ENCODE measurements at regions of chr9 and their contacts with region 1.

Region 1: DNA sequence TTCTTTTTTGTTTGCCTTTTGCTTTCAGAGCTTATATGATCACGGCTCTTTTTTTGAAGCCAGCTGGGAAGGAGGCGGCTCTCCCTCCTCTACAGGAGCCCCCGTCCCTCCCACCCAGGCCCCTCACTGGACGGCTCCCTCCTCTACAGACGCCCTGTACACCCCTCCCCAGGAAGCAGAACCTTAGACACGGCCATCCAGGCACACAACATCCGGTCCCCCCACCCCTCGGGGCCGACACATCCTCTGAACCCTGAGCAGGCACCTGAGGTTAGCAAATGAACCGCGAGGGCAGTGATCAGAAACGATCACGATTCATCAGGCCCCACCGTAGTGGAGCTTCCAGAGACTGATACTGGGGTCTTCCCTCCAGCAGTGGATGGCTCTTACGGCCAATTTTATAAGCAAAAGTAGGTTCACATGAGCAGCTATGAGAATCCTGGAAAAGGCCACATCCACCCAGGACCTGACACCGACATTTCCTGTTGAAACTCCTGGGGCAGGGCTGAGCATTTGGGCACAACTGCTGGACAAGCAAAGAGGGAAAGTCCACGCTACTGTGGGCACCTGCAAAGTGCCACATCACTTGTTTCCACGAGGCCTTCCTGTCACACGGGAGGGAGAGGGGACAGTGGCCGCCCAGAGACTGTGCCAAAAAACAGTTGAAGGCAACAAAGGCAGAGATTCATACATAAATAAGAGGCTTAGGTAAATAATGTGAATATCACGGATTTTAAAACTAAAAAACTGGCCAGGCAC is 78.9 kb downstream of the SEMA4D start:
- DNase-seq: peak; percentile 89
- ATAC-seq: peak; percentile 63
- H3K4me3 Mint-ChIP-seq: peak overlapping the region; percentile 74
- H3K27ac Mint-ChIP-seq: peak overlapping the region; percentile 88
- H3K4me1 Mint-ChIP-seq: peaks cover 96% of the 10 kb centered on the region
- H3K27me3 Mint-ChIP-seq: no peaks in the 10 kb centered on the region

Region 2: DNA sequence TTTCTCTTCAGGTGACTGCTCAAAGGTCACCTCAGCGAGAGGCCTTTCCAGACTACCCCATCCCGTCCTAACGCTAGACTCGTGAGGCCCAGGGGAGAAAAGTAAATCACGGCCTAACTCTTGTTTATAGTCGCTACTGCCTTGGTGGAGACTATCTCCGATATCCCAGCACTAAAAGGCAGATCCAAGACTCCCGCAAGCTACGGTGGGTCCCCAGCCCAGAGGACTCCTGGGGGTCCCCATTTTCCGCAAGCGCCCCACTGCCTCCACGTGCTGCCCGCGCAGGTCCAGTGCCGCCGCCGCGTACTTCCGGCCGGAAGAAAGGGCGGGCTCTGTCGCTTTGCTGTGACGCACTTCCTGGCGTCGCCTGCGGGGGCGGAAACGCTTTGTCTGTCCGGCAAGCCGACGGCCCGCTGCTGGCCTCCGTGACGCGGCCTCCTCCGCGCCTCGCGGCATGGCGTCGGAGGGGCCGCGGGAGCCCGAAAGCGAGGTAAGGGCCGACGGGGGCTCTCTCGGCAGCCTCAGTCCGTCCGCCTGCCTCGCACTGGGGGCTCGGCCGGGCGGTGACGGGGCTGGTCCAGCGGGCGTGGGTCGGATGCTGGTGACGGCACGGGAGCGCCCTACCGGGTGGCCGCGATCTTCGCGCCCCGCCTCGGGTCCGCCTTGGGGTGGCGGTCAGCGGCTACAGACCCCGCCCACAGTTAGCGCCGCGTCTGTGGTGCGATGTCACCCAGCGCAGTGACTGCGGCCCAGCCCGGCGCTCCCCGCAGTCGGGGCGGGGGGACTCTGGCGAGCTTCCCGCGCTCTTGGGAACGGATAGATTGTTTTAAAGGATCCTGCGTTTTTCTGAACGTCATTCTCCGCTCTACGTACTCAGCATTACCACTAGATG is 100.7 kb before region 1 on chr9 and contains the start of gene SECISBP2:
- CTCF ChIA-PET with region 1: interaction called, 10 read pairs
- POLR2A ChIA-PET with region 1: no interaction called
- DNase-seq: peak; percentile 95
- ATAC-seq: peak; percentile 90
- H3K4me3 Mint-ChIP-seq: peak within 1 kb of the TSS; percentile 85
- H3K27ac Mint-ChIP-seq: peak within 1 kb of the TSS; percentile 98
- H3K4me1 Mint-ChIP-seq: peaks cover 77% of the 10 kb centered on the region
- H3K27me3 Mint-ChIP-seq: no peaks in the 10 kb centered on the region
- total RNA-seq, gene SECISBP2: 35.8 to 37.5 TPM

Region 3: DNA sequence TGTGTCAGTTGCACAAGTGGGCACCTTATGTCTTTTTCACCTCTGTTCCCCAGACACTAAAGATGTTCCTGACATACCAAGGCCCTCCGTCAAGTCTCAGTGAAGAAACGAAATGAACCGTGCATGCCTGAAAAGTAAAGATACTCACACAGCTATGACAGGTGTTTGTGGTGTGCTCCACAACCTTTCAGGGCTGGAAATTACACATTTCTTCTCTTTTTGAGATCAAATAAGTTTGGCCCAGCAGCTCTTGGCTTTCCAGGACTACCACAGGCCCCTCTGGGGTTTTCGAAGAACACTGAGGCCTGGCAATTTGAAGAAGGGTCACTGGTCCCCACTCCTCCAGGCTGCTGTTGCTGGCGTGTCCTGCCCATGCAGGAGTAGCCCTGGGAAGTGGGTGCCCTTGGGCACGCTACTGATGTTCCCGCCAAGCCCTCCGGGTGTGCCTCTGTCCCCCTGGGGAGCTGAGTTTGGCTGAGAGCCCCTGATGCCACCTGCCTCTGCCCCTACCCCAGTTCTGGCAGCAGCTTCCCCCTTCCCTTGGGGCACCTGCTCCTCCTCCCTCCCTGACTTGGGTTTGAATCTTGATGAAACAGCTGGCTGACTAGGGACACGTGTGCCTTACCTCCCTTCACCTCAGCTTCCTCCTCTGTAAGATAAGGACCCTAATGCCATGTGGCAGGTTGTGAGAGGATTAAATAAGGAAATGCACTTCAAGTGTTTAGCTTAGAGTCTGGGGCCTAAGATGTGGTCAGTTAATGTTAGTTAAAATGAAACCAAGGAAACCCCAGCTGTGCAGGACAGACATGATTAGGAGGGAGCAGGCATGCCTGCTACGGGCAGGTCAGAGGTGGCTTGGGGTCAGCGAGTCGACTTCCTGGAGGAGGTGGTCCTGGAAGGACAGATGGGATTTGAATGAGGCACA is 136.7 kb after region 1 on chr9:
- CTCF ChIA-PET with region 1: no interaction called
- POLR2A ChIA-PET with region 1: no interaction called
- DNase-seq: no peak
- ATAC-seq: peak; percentile 29
- H3K4me3 Mint-ChIP-seq: no peak overlapping the region
- H3K27ac Mint-ChIP-seq: peak overlapping the region; percentile 56
- H3K4me1 Mint-ChIP-seq: peaks cover 27% of the 10 kb centered on the region
- H3K27me3 Mint-ChIP-seq: peaks cover 12% of the 10 kb centered on the region

Measured in activated CD8-positive, alpha-beta T cell treated with anti-CD3 and anti-CD28 coated beads, Interleukin-2, amount 10 ng/mL, durations not matched to agents 7 days and 5 days (primary cell).